CD8-positive, alpha-beta T cell (primary cell): ENCODE measurements at regions of chr10 and their contacts with region 1.

Region 1: GRCh38 chr10:100481462-100482081 is 18.8 kb downstream of the WNT8B start:
- DNase-seq: peak; percentile 85 to 98 (median 90)
- ATAC-seq: peak; percentile 97
- H3K4me3 ChIP-seq: peak overlapping the region; percentile 61 to 74
- H3K4me3 Mint-ChIP-seq: peak overlapping the region; percentile 87
- H3K27ac ChIP-seq: peak overlapping the region in 1 of 2 experiments; percentile 21
- H3K27ac Mint-ChIP-seq: no peak overlapping the region
- H3K4me1 ChIP-seq: peaks cover 10% of the 10 kb centered on the region
- H3K4me1 Mint-ChIP-seq: peaks cover 19% of the 10 kb centered on the region
- H3K27me3 ChIP-seq: no peaks in the 10 kb centered on the region
- H3K27me3 Mint-ChIP-seq: peaks cover 22% of the 10 kb centered on the region
- CTCF ChIP-seq: no peak

Region 2: GRCh38 chr10:100327007-100327717 is 154.4 kb before region 1 on chr10:
- CTCF ChIA-PET with region 1: interaction called, 10 read pairs
- POLR2A ChIA-PET with region 1: no interaction called
- intact Hi-C with region 1: no loop called
- DNase-seq: peak in 1 of 9 experiments; percentile 62
- ATAC-seq: peak; percentile 89
- H3K4me3 ChIP-seq: no peak overlapping the region
- H3K4me3 Mint-ChIP-seq: no peak overlapping the region
- H3K27ac ChIP-seq: no peak overlapping the region
- H3K27ac Mint-ChIP-seq: peak overlapping the region; percentile 75
- H3K4me1 ChIP-seq: peaks cover 15% of the 10 kb centered on the region
- H3K4me1 Mint-ChIP-seq: peaks cover 10% of the 10 kb centered on the region
- H3K27me3 ChIP-seq: peaks cover 0 to 4% of the 10 kb centered on the region in 2 experiments
- H3K27me3 Mint-ChIP-seq: peaks cover 11% of the 10 kb centered on the region
- CTCF ChIP-seq: no peak

Region 3: DNA sequence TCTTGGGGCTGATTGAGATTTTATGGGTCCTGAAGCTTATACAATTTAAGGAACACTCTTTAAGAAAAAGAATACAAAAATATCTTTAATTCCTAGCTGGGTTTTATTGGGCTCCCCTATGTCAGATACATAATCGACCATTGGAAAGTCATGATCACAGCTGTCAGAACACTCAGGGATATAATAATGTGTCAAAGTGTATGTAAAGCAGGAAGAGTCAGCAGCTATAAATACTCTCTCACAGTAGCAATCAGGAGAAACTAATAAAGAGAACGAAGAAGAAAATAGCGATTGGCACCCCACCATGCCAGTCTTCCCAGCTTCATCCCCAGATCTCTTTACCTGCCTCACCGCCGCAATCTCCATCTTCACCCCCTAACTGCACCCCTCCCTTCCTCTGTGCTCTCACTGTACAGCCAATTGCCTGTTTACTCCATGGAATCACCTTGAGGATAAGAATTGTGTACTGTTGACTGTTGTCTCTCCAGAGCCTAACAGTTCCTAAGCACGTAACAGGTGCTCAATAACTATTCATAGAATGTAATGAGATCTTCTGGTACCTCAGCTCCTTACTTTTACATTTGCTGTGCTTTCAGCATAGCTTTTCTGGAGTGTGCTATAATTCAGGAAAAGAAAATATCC is 42.8 kb before region 1 on chr10:
- CTCF ChIA-PET with region 1: interaction called, 13 read pairs
- POLR2A ChIA-PET with region 1: no interaction called
- intact Hi-C with region 1: loop called (anchors 1 to 5 kb)
- DNase-seq: no peak
- ATAC-seq: no peak
- H3K4me3 ChIP-seq: no peak overlapping the region
- H3K4me3 Mint-ChIP-seq: no peak overlapping the region
- H3K27ac ChIP-seq: no peak overlapping the region
- H3K27ac Mint-ChIP-seq: no peak overlapping the region
- H3K4me1 ChIP-seq: no peaks in the 10 kb centered on the region
- H3K4me1 Mint-ChIP-seq: peaks cover 2% of the 10 kb centered on the region
- H3K27me3 ChIP-seq: no peaks in the 10 kb centered on the region
- H3K27me3 Mint-ChIP-seq: no peaks in the 10 kb centered on the region
- CTCF ChIP-seq: no peak

Region 4: DNA sequence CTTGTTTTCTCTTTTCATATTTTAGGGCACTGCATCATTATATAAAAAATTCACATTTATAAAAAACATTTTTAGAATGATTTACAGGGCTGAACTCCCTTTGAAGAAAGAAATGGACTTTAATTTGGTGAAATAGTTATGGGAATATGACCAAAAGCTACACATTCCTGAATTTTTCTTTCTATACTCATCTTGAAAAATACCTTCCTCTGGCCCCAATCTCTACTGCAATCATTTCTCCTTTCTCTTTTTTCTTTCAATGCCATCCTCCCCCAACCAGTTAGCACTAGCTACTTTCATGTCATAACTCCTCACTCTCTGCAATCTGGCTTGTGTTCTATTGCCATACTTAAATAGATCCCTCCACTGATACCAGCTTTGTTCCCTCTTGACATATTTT is 12.6 kb before region 1 on chr10:
- CTCF ChIA-PET with region 1: interaction called, 22 read pairs
- POLR2A ChIA-PET with region 1: no interaction called
- intact Hi-C with region 1: no loop called
- DNase-seq: no peak
- ATAC-seq: no peak
- H3K4me3 ChIP-seq: no peak overlapping the region
- H3K4me3 Mint-ChIP-seq: no peak overlapping the region
- H3K27ac ChIP-seq: no peak overlapping the region
- H3K27ac Mint-ChIP-seq: no peak overlapping the region
- H3K4me1 ChIP-seq: no peaks in the 10 kb centered on the region
- H3K4me1 Mint-ChIP-seq: no peaks in the 10 kb centered on the region
- H3K27me3 ChIP-seq: no peaks in the 10 kb centered on the region
- H3K27me3 Mint-ChIP-seq: no peaks in the 10 kb centered on the region
- CTCF ChIP-seq: no peak

Region 5: DNA sequence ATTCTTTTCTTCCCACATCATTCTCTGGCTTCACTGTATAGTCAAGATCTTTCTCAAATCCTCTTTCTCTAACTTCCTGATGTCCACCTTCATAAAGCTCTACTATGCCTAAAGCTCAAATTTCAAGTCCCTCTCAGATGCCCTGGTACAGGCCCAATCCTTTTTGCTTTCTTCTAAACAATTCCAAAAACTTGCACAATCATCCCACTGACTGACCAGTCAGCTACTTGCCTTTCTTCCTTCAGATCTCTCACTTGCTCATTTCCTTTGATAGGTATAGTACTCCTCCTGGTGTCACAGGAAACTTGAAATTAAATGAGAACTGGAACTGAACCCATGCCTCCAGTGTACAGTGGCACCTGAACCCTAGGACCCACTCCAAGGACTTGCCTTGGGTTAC is 19.9 kb after region 1 on chr10:
- CTCF ChIA-PET with region 1: interaction called, 238 read pairs
- POLR2A ChIA-PET with region 1: interaction called, 5 read pairs
- intact Hi-C with region 1: no loop called
- DNase-seq: no peak
- ATAC-seq: no peak
- H3K4me3 ChIP-seq: no peak overlapping the region
- H3K4me3 Mint-ChIP-seq: no peak overlapping the region
- H3K27ac ChIP-seq: no peak overlapping the region
- H3K27ac Mint-ChIP-seq: no peak overlapping the region
- H3K4me1 ChIP-seq: peaks cover under 1% of the 10 kb centered on the region
- H3K4me1 Mint-ChIP-seq: peaks cover 13% of the 10 kb centered on the region
- H3K27me3 ChIP-seq: no peaks in the 10 kb centered on the region
- H3K27me3 Mint-ChIP-seq: no peaks in the 10 kb centered on the region
- CTCF ChIP-seq: no peak

Region 6: DNA sequence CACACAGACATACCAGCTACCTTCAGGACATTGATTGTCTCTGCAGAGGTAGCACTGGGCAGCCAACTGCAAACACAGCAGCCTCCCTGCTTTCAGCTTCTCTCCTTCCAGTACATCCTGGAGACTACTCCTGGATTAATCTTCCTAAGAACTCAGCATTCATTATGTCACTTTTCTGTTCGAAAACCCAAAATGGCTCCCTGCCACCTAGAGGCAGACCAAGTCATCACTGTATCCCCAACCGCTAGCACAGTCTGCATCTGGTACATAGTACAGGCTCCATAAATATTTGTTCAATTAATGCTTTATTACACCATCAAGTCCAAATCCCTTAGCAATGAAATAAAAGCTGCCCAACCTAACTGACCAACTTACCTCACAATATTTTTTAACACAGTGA is 43.1 kb after region 1 on chr10:
- CTCF ChIA-PET with region 1: interaction called, 238 read pairs
- POLR2A ChIA-PET with region 1: interaction called, 3 read pairs
- intact Hi-C with region 1: loop called in 1 of 2 experiments (anchors 1 kb)
- DNase-seq: no peak
- ATAC-seq: no peak
- H3K4me3 ChIP-seq: no peak overlapping the region
- H3K4me3 Mint-ChIP-seq: no peak overlapping the region
- H3K27ac ChIP-seq: no peak overlapping the region
- H3K27ac Mint-ChIP-seq: no peak overlapping the region
- H3K4me1 ChIP-seq: peaks cover 28% of the 10 kb centered on the region
- H3K4me1 Mint-ChIP-seq: peaks cover 31% of the 10 kb centered on the region
- H3K27me3 ChIP-seq: no peaks in the 10 kb centered on the region
- H3K27me3 Mint-ChIP-seq: no peaks in the 10 kb centered on the region
- CTCF ChIP-seq: no peak

Region 7: GRCh38 chr10:100529475-100530298 is 48.1 kb after region 1 on chr10 and contains the start of gene NDUFB8:
- CTCF ChIA-PET with region 1: interaction called, 27 read pairs
- POLR2A ChIA-PET with region 1: interaction called, 3 read pairs
- intact Hi-C with region 1: loop called in 1 of 2 experiments (anchors 1 kb)
- DNase-seq: peak; percentile 74 to 92 (median 87)
- ATAC-seq: peak; percentile 84
- H3K4me3 ChIP-seq: peak within 1 kb of the TSS; percentile 81 to 99
- H3K4me3 Mint-ChIP-seq: peak within 1 kb of the TSS; percentile 99
- H3K27ac ChIP-seq: peak within 1 kb of the TSS; percentile 77 to 83
- H3K27ac Mint-ChIP-seq: peak within 1 kb of the TSS; percentile 93
- H3K4me1 ChIP-seq: peaks cover 35% of the 10 kb centered on the region
- H3K4me1 Mint-ChIP-seq: peaks cover 38% of the 10 kb centered on the region
- H3K27me3 ChIP-seq: no peaks in the 10 kb centered on the region
- H3K27me3 Mint-ChIP-seq: no peaks in the 10 kb centered on the region
- CTCF ChIP-seq: no peak
- total RNA-seq, gene NDUFB8: 156 to 163 TPM